ENCODE measurements at regions of chr12 and their contacts with region 1.

Region 1: GRCh38 chr12:15590180-15590826 is 198.9 kb downstream of the EPS8 start:
- DNase-seq: peak; percentile 78 to 80
- ATAC-seq: peak; percentile 90 to 94
- H3K4me3 ChIP-seq: peak overlapping the region; percentile 43
- H3K27ac ChIP-seq: peak overlapping the region; percentile 75 to 80
- H3K4me1 ChIP-seq: peaks cover 11% of the 10 kb centered on the region; the same call in 1 of the 3 replicates
- CTCF ChIP-seq: peak; percentile 96
- EP300 ChIP-seq: no peak
- POLR2A ChIP-seq: no peak
- RAD21 ChIP-seq: peak; percentile 98 to 99

Region 2: DNA sequence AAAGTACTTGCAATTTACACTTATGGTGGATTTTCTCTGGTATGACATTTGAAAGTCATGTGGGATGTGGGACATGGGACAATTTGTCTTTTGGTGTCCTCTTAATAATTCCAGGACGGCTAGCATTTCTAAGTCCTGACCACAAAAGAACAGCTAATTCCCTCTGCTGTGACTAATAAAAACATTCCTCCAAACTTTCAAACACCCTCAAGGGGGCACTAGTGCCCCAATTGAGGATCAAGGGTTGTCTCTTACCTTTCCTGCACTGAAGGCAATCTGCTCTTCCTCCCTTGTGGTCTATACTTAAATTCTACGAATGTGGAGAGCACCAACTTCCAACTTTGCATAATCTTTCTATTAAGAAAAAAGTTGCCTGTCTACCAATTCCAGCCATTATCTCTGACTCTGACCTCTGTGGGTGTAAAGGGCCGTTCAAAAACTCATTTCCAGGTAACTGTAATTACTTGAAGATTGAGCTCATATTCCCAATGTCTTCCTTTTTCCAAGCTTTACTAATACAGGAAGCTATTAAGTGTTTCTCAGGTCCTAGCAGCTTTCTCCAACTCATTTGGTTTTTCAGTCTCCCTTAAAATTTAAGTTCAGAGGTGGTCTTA is 57.8 kb before region 1 on chr12:
- CTCF ChIA-PET with region 1: interaction called, 14 read pairs
- POLR2A ChIA-PET with region 1: no interaction called
- DNase-seq: peak; percentile 44 to 73
- ATAC-seq: peak; percentile 82 to 94
- H3K4me3 ChIP-seq: no peak overlapping the region
- H3K27ac ChIP-seq: no peak overlapping the region
- H3K4me1 ChIP-seq: peaks cover 3% of the 10 kb centered on the region; the same call in 1 of the 3 replicates
- CTCF ChIP-seq: peak; percentile 71
- EP300 ChIP-seq: no peak
- POLR2A ChIP-seq: no peak
- RAD21 ChIP-seq: peak; percentile 81 to 92

Region 3: GRCh38 chr12:15608941-15609340 is 18.6 kb after region 1 on chr12:
- CTCF ChIA-PET with region 1: interaction called, 10 read pairs
- POLR2A ChIA-PET with region 1: no interaction called
- DNase-seq: no peak
- ATAC-seq: no peak
- H3K4me3 ChIP-seq: no peak overlapping the region
- H3K27ac ChIP-seq: no peak overlapping the region
- H3K4me1 ChIP-seq: no peaks in the 10 kb centered on the region
- CTCF ChIP-seq: no peak
- EP300 ChIP-seq: no peak
- POLR2A ChIP-seq: no peak
- RAD21 ChIP-seq: no peak

Region 4: DNA sequence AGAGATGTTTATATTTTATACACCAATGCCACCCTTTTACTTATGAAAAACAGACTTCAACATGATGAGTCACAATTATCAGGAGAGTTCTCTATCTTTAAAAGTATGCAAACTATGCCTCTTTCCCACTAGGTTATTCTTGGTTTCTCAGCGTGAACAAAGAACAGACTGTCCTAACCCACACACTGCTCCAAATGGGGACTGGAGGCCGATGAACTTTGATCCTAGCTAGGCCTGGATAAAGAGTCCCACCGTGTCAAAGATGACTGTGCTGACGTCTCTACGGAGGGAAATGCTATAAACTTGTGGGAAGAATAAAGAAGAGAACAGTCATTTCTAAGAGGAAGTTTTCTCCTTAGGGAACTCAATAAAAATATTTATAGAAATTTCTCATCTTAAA is 38.8 kb after region 1 on chr12:
- CTCF ChIA-PET with region 1: interaction called, 10 read pairs
- POLR2A ChIA-PET with region 1: no interaction called
- DNase-seq: peak; percentile 52 to 97
- ATAC-seq: peak; percentile 98 to 99
- H3K4me3 ChIP-seq: no peak overlapping the region
- H3K27ac ChIP-seq: peak overlapping the region; percentile 80 to 89
- H3K4me1 ChIP-seq: peaks cover 74% of the 10 kb centered on the region
- CTCF ChIP-seq: no peak
- EP300 ChIP-seq: peak; percentile 57 to 76; a peak in 4 of 5 replicates
- POLR2A ChIP-seq: no peak
- RAD21 ChIP-seq: peak in 1 of 2 experiments; percentile 37; a peak in 2 of 5 replicates

Region 5: DNA sequence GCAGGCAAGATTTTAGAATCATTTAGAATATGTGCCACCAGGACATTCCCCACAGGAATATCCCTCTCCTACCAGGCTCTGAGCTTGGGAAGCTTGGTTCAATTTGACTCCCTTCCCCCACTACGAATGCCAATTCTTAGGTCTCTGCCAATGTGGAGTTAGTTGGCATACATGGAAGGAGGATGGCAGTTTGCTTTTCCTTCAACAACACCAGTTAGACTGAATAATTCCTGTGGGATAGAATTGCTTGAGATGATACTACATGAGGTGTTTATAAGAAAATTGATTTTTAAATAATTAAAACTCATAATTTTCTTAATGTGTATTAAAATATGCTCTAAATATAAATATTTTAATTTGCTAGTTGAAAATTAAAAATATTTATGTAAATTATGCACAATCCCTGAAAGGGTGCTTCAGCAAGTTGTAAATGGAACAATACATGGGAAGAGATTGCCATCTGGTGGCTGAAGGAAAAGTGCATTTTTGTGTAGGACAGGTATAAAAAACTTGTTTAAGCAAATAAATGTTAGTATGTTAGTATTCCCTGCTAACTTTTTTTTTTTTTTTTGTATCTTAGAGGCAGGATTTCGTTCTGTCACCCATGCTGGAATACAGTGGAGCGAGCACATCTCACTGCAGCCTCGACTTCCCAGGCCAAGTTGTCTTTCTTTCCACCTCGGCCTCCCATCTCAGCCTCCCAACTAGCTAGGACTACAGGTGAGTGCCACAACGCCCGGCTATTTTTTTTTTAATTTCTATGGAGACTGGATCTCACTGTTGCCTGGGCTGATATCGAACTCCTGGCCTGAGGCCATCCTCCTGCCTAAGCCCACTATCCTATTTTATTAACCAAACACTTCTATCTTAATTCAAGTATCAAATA is 266.0 kb after region 1 on chr12:
- CTCF ChIA-PET with region 1: interaction called, 296 read pairs
- POLR2A ChIA-PET with region 1: interaction called, 4 read pairs
- DNase-seq: peak; percentile 31 to 78
- ATAC-seq: peak in 1 of 2 experiments; percentile 82; a peak in 3 of 6 replicates
- H3K4me3 ChIP-seq: no peak overlapping the region
- H3K27ac ChIP-seq: peak overlapping the region; percentile 40 to 70; a peak in 5 of 6 replicates
- H3K4me1 ChIP-seq: peaks cover 31% of the 10 kb centered on the region
- CTCF ChIP-seq: peak; percentile 98
- EP300 ChIP-seq: no peak
- POLR2A ChIP-seq: no peak
- RAD21 ChIP-seq: peak; percentile 99

Measured in A549 (cell line).